HCT116 (cell line): ENCODE measurements at regions of chr17 and their contacts with region 1.

Region 1: DNA sequence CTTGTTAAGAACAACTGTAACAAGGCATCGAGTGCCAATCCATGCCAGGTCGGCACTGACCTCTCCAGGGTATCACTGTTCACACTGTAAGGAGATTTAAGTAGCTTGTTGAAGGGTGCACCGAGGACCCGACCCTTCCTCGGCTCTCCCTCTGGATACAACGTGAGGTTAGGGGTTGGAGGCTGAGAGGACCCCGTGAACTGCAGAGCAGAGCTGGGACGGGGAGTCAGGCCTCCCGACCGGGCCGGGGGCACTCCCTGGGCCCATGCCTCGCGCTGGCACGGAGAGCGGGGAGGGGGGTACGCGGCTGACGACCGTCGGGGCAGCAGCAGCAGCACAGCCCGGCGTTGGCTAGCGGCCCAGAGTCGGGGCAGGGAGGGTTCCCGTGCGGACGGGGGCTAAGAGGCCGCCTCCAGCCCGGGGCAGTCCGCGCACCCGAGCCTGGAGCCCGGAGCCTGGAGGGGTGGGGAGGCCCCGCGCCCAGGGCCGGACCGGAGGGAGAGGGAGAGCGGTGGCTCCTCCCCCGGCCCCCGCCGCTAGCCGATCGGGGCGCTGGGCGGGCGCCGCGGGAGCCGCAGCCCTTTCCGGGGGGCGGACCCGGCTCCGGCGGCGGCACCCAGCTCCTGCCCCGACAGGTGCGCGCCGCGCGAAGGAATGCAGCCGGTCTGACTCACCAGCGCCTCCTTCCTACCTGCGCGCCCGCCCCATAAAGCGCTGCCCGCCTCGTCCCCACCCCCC is at the start of gene ITGB4:
- DNase-seq: peak; percentile 72
- ATAC-seq: peak; percentile 88
- H3K4me3 ChIP-seq: peak within 1 kb of the TSS; percentile 87 to 95
- H3K27ac ChIP-seq: peak within 1 kb of the TSS; percentile 94
- H3K4me1 ChIP-seq: peaks cover 27 to 43% of the 10 kb centered on the region in 2 experiments
- H3K27me3 ChIP-seq: no peaks in the 10 kb centered on the region
- CTCF ChIP-seq: no peak
- POLR2A ChIP-seq: no peak
- RAD21 ChIP-seq: no peak; the same call in 1 of the 2 replicates
- total RNA-seq, gene ITGB4: 568 TPM

Region 2: DNA sequence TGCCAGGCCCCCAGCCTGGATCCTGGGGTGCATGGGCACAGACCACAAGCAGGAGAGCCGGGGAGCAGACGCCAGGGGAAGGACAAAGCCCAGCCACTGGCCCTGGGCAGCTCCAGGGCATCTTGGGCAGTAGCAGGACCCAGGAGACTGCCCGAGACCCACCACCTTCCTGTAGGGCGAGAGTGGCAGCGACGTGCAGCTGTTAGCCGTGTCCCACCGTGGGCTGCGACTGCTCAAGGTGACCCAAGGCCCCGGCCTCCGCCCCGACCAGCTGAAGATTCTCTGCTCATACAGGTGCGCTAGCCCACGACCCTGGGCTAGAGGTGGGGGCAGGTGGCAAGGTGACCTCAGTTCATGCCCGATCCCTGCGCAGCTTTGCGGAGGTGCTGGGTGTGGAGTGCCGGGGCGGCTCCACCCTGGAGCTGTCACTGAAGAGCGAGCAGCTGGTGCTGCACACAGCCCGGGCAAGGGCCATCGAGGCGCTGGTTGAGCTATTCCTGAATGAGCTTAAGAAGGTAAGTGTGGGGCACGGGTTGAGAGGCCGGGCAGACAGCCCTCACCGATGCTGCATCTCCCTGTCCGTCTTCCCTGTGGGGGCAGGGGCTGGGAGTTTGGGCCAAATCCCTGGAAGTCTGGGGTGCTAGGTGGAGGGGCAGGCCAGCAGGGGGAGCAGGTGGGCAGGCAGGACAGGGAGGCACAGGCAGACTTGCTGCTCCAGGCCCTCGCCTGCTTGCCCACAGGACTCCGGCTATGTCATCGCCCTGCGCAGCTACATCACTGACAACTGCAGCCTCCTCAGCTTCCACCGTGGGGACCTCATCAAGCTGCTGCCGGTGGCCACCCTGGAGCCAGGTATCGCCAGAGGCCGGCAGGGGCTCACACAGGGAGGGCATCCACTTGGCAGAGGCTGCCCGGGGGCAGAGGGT is 101.1 kb before region 1 on chr17:
- CTCF ChIA-PET with region 1: no interaction called
- POLR2A ChIA-PET with region 1: no interaction called
- RAD21 ChIA-PET with region 1: no interaction called
- intact Hi-C with region 1: no loop called
- DNase-seq: no peak
- ATAC-seq: peak; percentile 80
- H3K4me3 ChIP-seq: no peak overlapping the region
- H3K27ac ChIP-seq: no peak overlapping the region
- H3K4me1 ChIP-seq: peaks cover 0 to 5% of the 10 kb centered on the region in 2 experiments; a peak in 1 of 4 replicates
- H3K27me3 ChIP-seq: no peaks in the 10 kb centered on the region
- CTCF ChIP-seq: peak; percentile 41 to 73 (median 65); a peak in 5 of 6 replicates
- POLR2A ChIP-seq: no peak
- RAD21 ChIP-seq: no peak

Region 3: DNA sequence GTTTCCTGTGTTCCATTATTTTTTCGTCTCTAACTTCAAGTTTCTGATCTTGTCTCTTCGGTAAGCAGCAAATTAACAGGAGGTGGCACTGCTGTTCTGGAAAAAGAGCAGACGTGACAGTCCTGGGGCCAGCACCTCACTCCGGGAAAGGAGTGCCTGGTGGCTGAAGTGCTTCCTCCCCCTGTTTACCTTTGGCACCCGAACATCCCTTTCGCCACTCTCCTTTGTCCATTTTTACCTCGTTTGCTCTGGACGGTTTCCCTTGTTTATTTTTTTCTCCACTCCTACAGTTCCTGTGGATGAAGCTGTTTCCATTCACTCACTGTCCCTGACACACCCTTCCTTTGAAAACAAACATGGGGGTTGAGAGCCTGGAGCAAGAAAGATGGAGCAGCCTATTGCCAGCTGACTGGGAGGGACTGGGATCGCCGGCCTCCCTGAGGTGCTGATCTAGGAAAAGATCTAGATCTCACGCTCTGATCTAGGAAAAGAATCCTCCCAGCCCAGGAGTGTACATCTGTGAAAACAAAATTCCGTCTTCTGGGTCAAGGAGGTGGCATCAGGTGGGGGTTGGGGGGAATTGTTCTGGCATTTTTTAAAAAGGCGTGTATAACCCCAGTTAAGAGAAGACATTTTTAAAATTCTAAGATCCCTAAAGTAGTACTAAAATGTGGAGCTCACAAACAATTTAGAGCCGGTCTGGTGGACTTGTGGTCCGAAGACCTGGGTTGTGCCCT is 41.0 kb before region 1 on chr17:
- CTCF ChIA-PET with region 1: interaction called, 12 read pairs
- POLR2A ChIA-PET with region 1: interaction called, 41 read pairs
- RAD21 ChIA-PET with region 1: interaction called, 3 to 4 read pairs
- intact Hi-C with region 1: loop called (anchors 2 kb)
- DNase-seq: no peak
- ATAC-seq: peak; percentile 33; the same call in 1 of the 2 replicates
- H3K4me3 ChIP-seq: no peak overlapping the region
- H3K27ac ChIP-seq: peak overlapping the region; percentile 48; the same call in 1 of the 2 replicates
- H3K4me1 ChIP-seq: peaks cover 52 to 74% of the 10 kb centered on the region in 2 experiments
- H3K27me3 ChIP-seq: no peaks in the 10 kb centered on the region
- CTCF ChIP-seq: peak; percentile 38 to 90 (median 51); a peak in 5 of 6 replicates
- POLR2A ChIP-seq: no peak
- RAD21 ChIP-seq: peak; percentile 96

Region 4: DNA sequence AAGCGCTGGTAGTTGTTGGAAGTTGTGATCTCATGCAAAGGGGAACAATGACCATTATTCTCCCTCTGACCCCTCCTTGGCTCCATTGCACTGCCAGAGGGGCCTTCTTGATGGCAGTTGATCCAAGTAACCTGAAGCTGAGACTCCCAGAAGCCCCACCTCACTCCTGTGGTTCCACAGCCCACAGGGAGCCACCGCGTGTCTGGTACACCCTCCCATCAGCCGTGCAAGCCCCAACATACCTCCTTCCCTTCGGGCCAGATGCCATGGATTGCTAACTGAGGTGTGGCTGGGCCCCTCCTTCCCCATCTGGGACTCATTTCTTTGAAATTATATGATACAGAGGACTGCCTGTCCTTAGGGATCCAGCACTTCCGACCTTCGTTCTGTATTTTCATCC is 36.0 kb before region 1 on chr17:
- CTCF ChIA-PET with region 1: interaction called, 12 read pairs
- POLR2A ChIA-PET with region 1: interaction called, 41 read pairs
- RAD21 ChIA-PET with region 1: interaction called, 3 to 4 read pairs
- intact Hi-C with region 1: no loop called
- DNase-seq: no peak
- ATAC-seq: peak; percentile 70
- H3K4me3 ChIP-seq: peak overlapping the region in 1 of 2 experiments; percentile 45; a peak in 3 of 4 replicates
- H3K27ac ChIP-seq: peak overlapping the region; percentile 67
- H3K4me1 ChIP-seq: peaks cover 71 to 100% of the 10 kb centered on the region in 2 experiments
- H3K27me3 ChIP-seq: no peaks in the 10 kb centered on the region
- CTCF ChIP-seq: no peak
- POLR2A ChIP-seq: no peak
- RAD21 ChIP-seq: no peak

Region 5: DNA sequence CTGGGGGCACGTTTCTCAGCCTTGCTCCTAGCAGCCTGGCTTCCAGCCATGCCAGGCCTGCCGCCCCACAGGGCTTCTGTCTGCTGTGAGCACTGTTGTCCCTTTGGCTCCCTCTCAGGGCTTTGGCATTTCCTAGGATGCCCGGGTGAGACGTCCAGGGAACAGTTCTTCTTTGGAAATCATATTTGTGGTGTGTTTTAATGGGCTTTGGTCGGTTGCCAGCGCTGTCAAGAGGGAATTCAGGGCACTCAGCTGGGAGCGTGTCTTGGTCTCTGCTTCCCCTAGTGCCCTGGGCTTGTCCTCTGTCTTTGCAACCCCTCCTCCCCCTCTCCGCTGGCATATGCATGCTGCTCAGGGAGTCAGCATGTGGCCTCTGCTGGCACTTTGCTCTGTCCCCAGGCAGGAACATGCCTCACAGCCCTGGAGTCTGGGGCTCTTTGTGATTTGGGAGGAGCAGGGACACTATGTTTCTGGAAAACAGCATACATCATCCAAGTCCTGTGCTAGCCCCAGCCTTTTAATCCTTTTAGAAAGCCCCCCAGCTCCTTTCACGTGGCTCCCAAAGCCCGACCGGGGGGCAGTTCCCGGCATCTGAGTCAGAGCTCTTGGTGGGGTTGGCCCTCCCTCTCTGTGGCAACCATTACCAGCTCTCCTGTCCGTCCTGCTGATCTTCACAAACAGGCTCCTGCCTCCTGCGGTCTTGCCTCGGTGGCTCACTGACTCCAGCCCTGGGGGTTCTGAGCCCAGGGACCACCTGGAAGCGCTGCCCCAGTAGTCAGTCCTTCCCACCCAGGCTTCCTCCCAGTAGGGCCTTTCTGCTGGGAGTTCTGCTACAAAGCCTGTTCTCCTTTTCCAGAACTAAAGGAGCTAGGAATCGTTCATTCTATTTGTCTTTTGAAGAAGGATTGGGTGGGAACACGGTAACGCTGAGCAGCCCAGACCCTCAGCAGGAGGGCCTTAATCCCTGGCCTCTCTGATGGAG is 27.1 kb before region 1 on chr17:
- CTCF ChIA-PET with region 1: interaction called, 7 read pairs
- POLR2A ChIA-PET with region 1: interaction called, 17 read pairs
- RAD21 ChIA-PET with region 1: interaction called in 1 of 2 experiments, 5 read pairs
- intact Hi-C with region 1: no loop called
- DNase-seq: peak; percentile 76
- ATAC-seq: peak; percentile 69
- H3K4me3 ChIP-seq: no peak overlapping the region
- H3K27ac ChIP-seq: peak overlapping the region; percentile 94
- H3K4me1 ChIP-seq: peaks cover 85 to 99% of the 10 kb centered on the region in 2 experiments
- H3K27me3 ChIP-seq: no peaks in the 10 kb centered on the region
- CTCF ChIP-seq: no peak; a peak in 1 of 6 replicates
- POLR2A ChIP-seq: no peak
- RAD21 ChIP-seq: peak; percentile 42; the same call in 1 of the 2 replicates

Region 6: GRCh38 chr17:75707131-75707571 is 13.7 kb before region 1 on chr17:
- CTCF ChIA-PET with region 1: interaction called, 12 read pairs
- POLR2A ChIA-PET with region 1: interaction called, 45 read pairs
- RAD21 ChIA-PET with region 1: interaction called in 1 of 2 experiments, 5 read pairs
- intact Hi-C with region 1: loop called (anchors 2 kb)
- DNase-seq: peak; percentile 94
- ATAC-seq: peak; percentile 95
- H3K4me3 ChIP-seq: peak overlapping the region in 1 of 2 experiments; percentile 43; a peak in 2 of 4 replicates
- H3K27ac ChIP-seq: peak overlapping the region; percentile 85
- H3K4me1 ChIP-seq: peaks cover 55 to 86% of the 10 kb centered on the region in 2 experiments
- H3K27me3 ChIP-seq: no peaks in the 10 kb centered on the region
- CTCF ChIP-seq: no peak
- POLR2A ChIP-seq: no peak
- RAD21 ChIP-seq: no peak